PC-9 (cell line): ENCODE measurements at regions of chr1 and their contacts with region 1.

Region 1: GRCh38 chr1:200479816-200480215 is 70.0 kb upstream of the ZNF281 start:
- DNase-seq: no peak
- H3K4me3 ChIP-seq: no peak overlapping the region
- H3K27ac ChIP-seq: no peak overlapping the region
- H3K4me1 ChIP-seq: peaks cover 40% of the 10 kb centered on the region
- H3K27me3 ChIP-seq: no peaks in the 10 kb centered on the region
- CTCF ChIP-seq: no peak

Region 2: DNA sequence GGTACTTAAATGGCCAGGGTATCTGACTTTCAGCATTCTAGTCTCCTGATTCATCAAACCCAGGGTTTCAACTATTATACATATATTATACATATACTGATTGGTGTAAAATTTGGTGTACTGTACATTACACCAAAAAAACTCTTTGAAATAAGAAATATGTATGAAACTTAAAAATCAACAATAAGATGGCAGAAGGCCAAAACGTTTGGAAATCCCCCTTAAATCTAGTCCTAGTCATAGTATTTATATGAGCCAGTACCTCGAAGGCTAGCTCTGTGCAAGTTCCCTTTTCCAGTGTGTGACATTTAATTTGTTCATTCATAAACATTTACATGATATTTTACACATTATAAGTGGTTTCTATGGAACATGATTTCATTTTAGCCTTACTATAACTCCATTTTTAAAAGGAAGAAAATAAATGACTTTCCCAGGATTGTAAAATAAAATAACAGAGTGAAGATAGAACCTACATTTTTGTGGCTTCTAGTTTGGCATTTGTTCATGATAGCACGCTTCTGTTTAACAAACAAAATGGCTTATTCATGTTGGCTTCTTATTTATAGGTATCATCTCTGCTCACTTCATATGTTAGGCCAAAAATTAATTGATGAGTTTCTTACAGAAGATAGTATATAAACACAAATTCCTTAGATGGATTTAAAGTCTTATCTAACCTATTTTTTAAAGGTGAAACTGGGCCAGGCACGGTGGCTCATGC is 51.2 kb before region 1 on chr1:
- CTCF ChIA-PET with region 1: interaction called, 3 read pairs
- POLR2A ChIA-PET with region 1: no interaction called
- intact Hi-C with region 1: loop called (anchors 5 kb)
- DNase-seq: no peak
- H3K4me3 ChIP-seq: no peak overlapping the region
- H3K27ac ChIP-seq: peak overlapping the region; percentile 15; the same call in 1 of the 2 replicates
- H3K4me1 ChIP-seq: peaks cover 26% of the 10 kb centered on the region
- H3K27me3 ChIP-seq: no peaks in the 10 kb centered on the region
- CTCF ChIP-seq: no peak

Region 3: GRCh38 chr1:200437556-200438203 is 42.1 kb before region 1 on chr1:
- CTCF ChIA-PET with region 1: no interaction called
- POLR2A ChIA-PET with region 1: interaction called, 24 read pairs
- intact Hi-C with region 1: no loop called
- DNase-seq: no peak
- H3K4me3 ChIP-seq: no peak overlapping the region
- H3K27ac ChIP-seq: no peak overlapping the region
- H3K4me1 ChIP-seq: peaks cover 3% of the 10 kb centered on the region; the same call in 1 of the 2 replicates
- H3K27me3 ChIP-seq: no peaks in the 10 kb centered on the region
- CTCF ChIP-seq: no peak

Region 4: DNA sequence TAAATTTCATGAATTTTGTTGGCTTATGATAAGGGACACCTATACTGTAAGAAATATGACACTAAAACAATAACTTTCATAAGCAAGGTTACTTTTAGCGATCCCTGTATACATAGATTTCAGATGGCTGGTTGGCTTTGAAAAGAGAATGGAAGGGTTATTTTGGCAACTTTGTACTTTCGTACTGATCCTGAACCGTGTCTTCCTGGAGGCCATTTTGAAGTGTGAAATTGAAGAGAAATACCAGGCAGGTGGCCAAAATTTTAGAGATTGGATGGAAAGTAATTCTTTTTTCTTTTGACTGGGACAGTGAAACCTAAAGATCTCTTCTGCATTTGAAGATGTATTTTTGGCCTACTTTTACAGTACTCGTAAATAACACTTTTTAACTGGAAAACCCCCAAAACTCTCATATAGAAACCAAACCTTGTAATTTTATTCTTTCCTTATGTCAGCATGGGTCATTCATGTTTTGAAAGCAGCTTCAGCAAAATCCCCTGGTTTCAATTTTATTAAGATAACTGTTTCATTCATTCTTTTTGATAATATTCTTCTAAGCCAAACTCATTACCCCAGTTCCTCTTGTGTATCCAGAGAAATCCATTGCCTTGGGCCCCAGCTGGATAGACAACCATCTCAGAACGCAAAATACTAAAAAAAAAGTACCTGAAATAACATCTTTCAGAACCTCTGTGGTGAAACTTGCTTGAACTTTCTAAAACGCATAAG is 31.6 kb before region 1 on chr1:
- CTCF ChIA-PET with region 1: no interaction called
- POLR2A ChIA-PET with region 1: no interaction called
- intact Hi-C with region 1: no loop called
- DNase-seq: no peak
- H3K4me3 ChIP-seq: no peak overlapping the region
- H3K27ac ChIP-seq: no peak overlapping the region
- H3K4me1 ChIP-seq: 0 out of 2 replicates have a peak, but pooled peaks cover 1% of the 10 kb centered on the region
- H3K27me3 ChIP-seq: no peaks in the 10 kb centered on the region
- CTCF ChIP-seq: no peak